Heart left ventricle (tissue), 16 donors: ENCODE measurements at regions of chr13 and their contacts with region 1.

Region 1: GRCh38 chr13:25727253-25727652 is 324.6 kb downstream of the SHISA2 start:
- DNase-seq: no peak
- ATAC-seq: no peak
- H3K4me3 ChIP-seq: no peak overlapping the region
- H3K27ac ChIP-seq: no peak overlapping the region
- H3K4me1 ChIP-seq: no peaks in the 10 kb centered on the region
- H3K27me3 ChIP-seq: peaks cover 0 to 15% (median 0%) of the 10 kb centered on the region in 9 donors
- CTCF ChIP-seq: no peak
- POLR2A ChIP-seq: no peak

Region 2: DNA sequence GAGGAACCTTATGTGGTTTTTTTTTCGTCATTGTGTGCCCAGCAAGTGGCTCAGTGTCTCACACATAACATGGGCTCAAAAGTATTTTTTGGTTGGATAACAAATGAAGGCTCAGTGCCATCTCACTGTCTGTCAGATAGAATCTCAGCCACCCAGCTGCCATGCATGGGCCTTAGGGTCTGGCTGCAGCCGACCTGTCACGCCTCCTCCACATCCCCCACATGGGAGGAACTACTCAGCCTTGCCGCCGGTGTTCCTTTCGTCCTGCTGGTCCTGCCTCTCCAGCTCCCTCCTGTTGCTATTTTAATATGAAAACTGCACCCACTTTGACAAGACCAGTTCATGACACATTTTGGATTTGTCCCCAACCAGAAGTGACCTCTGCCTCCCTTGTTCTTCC is 203.4 kb after region 1 on chr13:
- intact Hi-C with region 1: loop called in 1 of 10 experiments (anchors 10 kb)
- DNase-seq: no peak
- ATAC-seq: no peak
- H3K4me3 ChIP-seq: no peak overlapping the region
- H3K27ac ChIP-seq: no peak overlapping the region
- H3K4me1 ChIP-seq: no peaks in the 10 kb centered on the region
- H3K27me3 ChIP-seq: peaks cover 0 to 27% (median 0%) of the 10 kb centered on the region in 9 donors
- CTCF ChIP-seq: no peak
- POLR2A ChIP-seq: no peak